Mammary epithelial cell (primary cell): ENCODE measurements at regions of chr2 and their contacts with region 1.

Region 1: GRCh38 chr2:101697124-101698013 is at the start of gene MAP4K4:
- DNase-seq: peak; percentile 83
- H3K4me3 ChIP-seq: peak within 1 kb of the TSS; percentile 60 to 85 (median 67)
- H3K27ac ChIP-seq: peak within 1 kb of the TSS; percentile 76
- H3K4me1 ChIP-seq: peaks cover 15% of the 10 kb centered on the region
- H3K27me3 ChIP-seq: no peaks in the 10 kb centered on the region
- CTCF ChIP-seq: peak in 1 of 2 donors; percentile 34
- total RNA-seq, gene MAP4K4: 65.2 to 212 TPM

Region 2: DNA sequence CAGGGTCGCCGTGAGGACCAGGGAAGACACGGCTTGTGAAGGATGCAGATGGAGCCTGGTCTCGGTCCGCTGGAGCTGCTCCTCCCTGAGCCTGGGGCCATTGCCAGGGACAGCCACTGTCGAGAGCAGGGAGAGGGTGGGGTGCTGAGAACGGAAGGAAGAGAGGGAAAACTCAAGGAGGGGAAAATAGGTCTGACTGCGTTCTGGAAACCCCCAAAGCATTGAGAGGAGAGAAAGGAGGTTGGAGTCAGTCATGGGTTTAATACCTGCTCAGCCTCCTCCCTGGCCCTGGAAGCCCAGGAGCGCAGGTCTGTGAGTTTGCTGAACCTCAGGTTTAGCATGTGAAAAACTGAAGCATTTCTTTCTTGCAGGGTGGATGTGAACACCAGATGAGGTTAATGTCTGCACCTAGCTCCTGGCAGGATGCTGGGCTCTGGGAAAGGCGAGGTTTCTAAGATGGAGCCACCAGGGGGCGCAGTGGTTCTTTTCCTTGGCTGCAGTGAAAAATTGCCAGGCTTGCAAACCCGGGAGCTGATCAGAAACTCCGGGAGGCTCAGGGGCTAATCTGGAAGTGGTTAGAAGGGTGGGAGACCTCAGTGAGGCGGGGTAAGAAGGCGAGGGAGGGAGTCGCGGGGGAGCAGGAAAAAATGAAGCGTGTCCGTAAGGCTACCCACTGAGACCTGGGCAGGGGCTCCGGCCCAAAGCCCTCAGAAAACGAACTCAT is 355.3 kb before region 1 on chr2:
- CTCF ChIA-PET with region 1: no interaction called
- dilution Hi-C with region 1: no loop called
- in situ Hi-C with region 1: loop called in 1 of 2 experiments (anchors 10 kb)
- intact Hi-C with region 1: loop called (anchors 5 kb)
- DNase-seq: peak; percentile 52
- H3K4me3 ChIP-seq: no peak overlapping the region
- H3K27ac ChIP-seq: no peak overlapping the region
- H3K4me1 ChIP-seq: no peaks in the 10 kb centered on the region
- H3K27me3 ChIP-seq: no peaks in the 10 kb centered on the region
- CTCF ChIP-seq: peak; percentile 80 to 84

Region 3: GRCh38 chr2:101597351-101597944 is 99.9 kb before region 1 on chr2:
- CTCF ChIA-PET with region 1: no interaction called
- dilution Hi-C with region 1: no loop called
- in situ Hi-C with region 1: loop called in 1 of 2 experiments (anchors 25 kb)
- intact Hi-C with region 1: no loop called
- DNase-seq: no peak
- H3K4me3 ChIP-seq: no peak overlapping the region
- H3K27ac ChIP-seq: no peak overlapping the region
- H3K4me1 ChIP-seq: no peaks in the 10 kb centered on the region
- H3K27me3 ChIP-seq: no peaks in the 10 kb centered on the region
- CTCF ChIP-seq: no peak

Region 4: DNA sequence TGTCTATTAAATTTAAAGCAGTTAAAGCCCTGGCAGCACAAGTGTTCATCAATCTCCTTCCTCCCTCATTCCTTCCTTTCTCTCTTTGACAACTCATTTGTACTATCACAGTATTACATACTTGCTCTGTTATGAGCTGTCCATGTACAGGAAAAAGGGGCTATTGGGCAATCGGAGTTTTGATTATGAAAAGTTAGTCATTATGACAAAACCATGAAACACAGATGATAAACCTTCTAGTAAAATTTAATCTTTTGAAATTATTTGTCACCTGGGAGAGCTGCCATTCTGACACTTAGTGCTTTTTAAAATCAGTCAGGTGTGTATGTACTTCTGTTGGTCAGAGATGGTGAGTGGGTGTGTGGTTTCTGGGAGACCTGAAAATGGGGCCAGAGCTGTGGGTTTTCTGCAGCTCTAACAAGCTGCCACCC is 39.5 kb after region 1 on chr2:
- CTCF ChIA-PET with region 1: no interaction called
- dilution Hi-C with region 1: no loop called
- in situ Hi-C with region 1: loop called in 1 of 2 experiments (anchors 5 kb)
- intact Hi-C with region 1: loop called (anchors 2 kb)
- DNase-seq: peak; percentile 95
- H3K4me3 ChIP-seq: no peak overlapping the region
- H3K27ac ChIP-seq: peak overlapping the region; percentile 93
- H3K4me1 ChIP-seq: peaks cover 80% of the 10 kb centered on the region
- H3K27me3 ChIP-seq: no peaks in the 10 kb centered on the region
- CTCF ChIP-seq: no peak

Region 5: GRCh38 chr2:101823347-101823791 is 126.0 kb after region 1 on chr2:
- CTCF ChIA-PET with region 1: interaction called, 8 read pairs
- dilution Hi-C with region 1: no loop called
- in situ Hi-C with region 1: loop called (anchors 5 to 10 kb)
- intact Hi-C with region 1: loop called (anchors 1 kb)
- DNase-seq: peak; percentile 75
- H3K4me3 ChIP-seq: peak overlapping the region in 2 of 3 experiments; percentile 3 to 4
- H3K27ac ChIP-seq: peak overlapping the region; percentile 88
- H3K4me1 ChIP-seq: peaks cover 81% of the 10 kb centered on the region
- H3K27me3 ChIP-seq: no peaks in the 10 kb centered on the region
- CTCF ChIP-seq: peak; percentile 79 to 86